ENCODE measurements at regions of chr7 and their contacts with region 1.

Region 1: DNA sequence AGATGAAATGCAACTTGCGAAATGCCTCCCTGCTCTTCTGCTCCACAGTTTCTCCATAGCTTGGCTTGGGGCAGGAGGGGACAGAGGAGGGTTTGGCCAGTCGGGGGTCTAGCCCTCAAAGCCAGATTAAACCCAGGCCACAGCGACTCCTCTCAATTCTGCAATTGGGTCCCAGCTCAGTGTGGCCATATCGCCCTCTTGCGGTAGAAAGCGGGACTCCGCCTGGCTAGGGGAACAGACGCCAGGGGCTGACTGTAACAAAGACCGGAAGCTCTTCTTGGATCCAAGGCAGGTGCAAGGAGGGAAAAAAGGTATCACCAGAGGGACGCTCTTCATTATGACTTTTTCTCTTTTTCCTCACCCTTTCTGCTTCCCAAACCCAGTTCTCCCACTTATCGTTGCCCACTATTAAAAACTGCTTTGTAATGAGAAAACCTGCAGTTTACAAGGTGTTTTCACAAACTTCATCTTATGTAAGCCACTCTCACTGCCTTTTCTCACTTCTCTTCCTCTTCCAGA is 36.6 kb upstream of the TNPO3 start:
- DNase-seq: peak; percentile 90 to 92 (median 91)
- ATAC-seq: peak; percentile 99
- H3K4me3 ChIP-seq: no peak overlapping the region
- H3K27ac ChIP-seq: no peak overlapping the region
- H3K4me1 ChIP-seq: peaks cover 0 to 2% of the 10 kb centered on the region in 2 experiments; a peak in 2 of 5 replicates
- H3K27me3 ChIP-seq: peaks cover 10 to 11% of the 10 kb centered on the region in 2 experiments; a peak in 4 of 5 replicates
- CTCF ChIP-seq: peak; percentile 99 to 100 (median 99)
- EP300 ChIP-seq: no peak
- POLR2A ChIP-seq: no peak
- RAD21 ChIP-seq: peak; percentile 97 to 99

Region 2: DNA sequence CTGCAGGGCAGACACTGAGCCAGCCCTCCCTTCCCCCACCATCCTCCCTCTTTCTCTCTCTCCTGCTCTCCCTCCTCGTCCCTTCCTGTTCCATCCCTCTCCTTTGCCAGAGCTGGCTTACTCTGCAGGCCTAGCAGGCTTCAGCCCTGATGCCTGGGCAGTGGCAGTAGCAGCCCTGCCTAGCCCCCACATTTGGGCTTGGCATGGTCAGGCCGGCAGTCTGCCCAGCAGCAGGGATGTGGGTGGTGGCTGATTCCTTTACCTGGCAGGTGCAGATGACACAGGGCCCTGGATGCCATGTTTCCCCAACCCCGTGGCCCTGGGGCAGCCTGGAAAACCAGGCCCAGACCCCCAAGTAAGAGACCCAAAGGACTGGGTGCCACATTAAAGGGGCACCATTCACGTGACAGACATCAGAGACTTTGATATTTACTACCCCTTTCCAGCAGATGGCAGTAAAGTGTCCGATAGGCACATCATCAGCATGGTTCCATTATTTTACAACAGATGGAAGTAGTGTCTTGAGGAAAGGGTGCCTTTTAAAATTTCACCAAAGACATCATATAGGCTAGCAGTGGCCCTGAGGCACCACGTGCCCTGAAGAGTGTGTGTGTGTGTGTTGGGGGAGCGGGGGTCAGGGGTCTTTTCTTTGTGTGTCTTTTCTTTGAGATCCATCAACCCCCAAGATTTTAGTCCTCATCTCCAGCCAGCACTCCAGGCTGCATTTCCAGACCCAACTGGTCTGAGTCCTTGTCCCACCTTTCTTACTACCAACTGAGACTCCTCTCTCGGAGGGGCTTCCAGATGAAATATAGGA is 187.0 kb before region 1 on chr7:
- CTCF ChIA-PET with region 1: interaction called, 10 read pairs
- POLR2A ChIA-PET with region 1: no interaction called
- in situ Hi-C with region 1: no loop called
- intact Hi-C with region 1: loop called (anchors 1 kb)
- DNase-seq: peak; percentile 64 to 78 (median 72)
- ATAC-seq: peak; percentile 76
- H3K4me3 ChIP-seq: no peak overlapping the region
- H3K27ac ChIP-seq: no peak overlapping the region
- H3K4me1 ChIP-seq: peaks cover 13 to 29% of the 10 kb centered on the region in 2 experiments
- H3K27me3 ChIP-seq: peaks cover 16 to 32% of the 10 kb centered on the region in 2 experiments
- CTCF ChIP-seq: peak; percentile 86 to 92 (median 91)
- EP300 ChIP-seq: no peak
- POLR2A ChIP-seq: no peak
- RAD21 ChIP-seq: peak; percentile 60 to 79

Region 3: DNA sequence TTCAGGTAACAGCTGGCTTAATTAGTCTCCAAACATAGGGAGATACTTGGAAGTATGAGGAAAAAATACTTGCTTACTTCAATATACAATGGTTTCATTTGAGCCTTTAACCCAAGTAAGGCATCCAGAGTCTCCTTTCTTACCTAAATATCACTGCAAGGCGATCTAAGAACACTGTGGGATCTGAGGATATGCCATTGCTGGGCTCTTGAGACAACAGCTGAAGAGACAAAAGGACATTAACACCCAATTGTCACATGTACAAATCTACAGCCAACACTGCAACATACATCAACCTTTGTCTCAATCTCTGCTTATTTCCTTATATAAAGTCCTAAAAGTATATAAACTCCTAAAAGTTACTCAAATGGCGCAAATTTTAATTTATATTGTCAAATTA is 109.4 kb before region 1 on chr7:
- CTCF ChIA-PET with region 1: no interaction called
- POLR2A ChIA-PET with region 1: no interaction called
- in situ Hi-C with region 1: no loop called
- intact Hi-C with region 1: loop called (anchors 5 kb)
- DNase-seq: no peak
- ATAC-seq: no peak
- H3K4me3 ChIP-seq: no peak overlapping the region
- H3K27ac ChIP-seq: no peak overlapping the region
- H3K4me1 ChIP-seq: no peaks in the 10 kb centered on the region
- H3K27me3 ChIP-seq: no peaks in the 10 kb centered on the region
- CTCF ChIP-seq: no peak
- EP300 ChIP-seq: no peak
- POLR2A ChIP-seq: no peak
- RAD21 ChIP-seq: no peak

Region 4: GRCh38 chr7:129054438-129055293 is 36.9 kb before region 1 on chr7 and contains the start of gene TNPO3:
- CTCF ChIA-PET with region 1: interaction called, 5 read pairs
- POLR2A ChIA-PET with region 1: interaction called, 3 read pairs
- in situ Hi-C with region 1: no loop called
- intact Hi-C with region 1: loop called (anchors 1 kb)
- DNase-seq: peak; percentile 97 to 99 (median 98)
- ATAC-seq: peak; percentile 91
- H3K4me3 ChIP-seq: peak within 1 kb of the TSS; percentile 80
- H3K27ac ChIP-seq: peak within 1 kb of the TSS; percentile 99
- H3K4me1 ChIP-seq: peaks cover 18 to 21% of the 10 kb centered on the region in 2 experiments; a peak in 4 of 5 replicates
- H3K27me3 ChIP-seq: no peaks in the 10 kb centered on the region
- CTCF ChIP-seq: peak in 2 of 3 experiments; percentile 1 to 7; a peak in 2 of 6 replicates
- EP300 ChIP-seq: peak; percentile 70
- POLR2A ChIP-seq: peak; percentile 98
- RAD21 ChIP-seq: 0 out of 4 replicates have a peak, but pooled peaks of 1 of the 2 experiments have one; percentile 10
- polyA plus RNA-seq, gene TNPO3: 35.8 to 46.0 TPM

Region 5: GRCh38 chr7:129210256-129210988 is 118.9 kb after region 1 on chr7:
- CTCF ChIA-PET with region 1: interaction called, 3 read pairs
- POLR2A ChIA-PET with region 1: no interaction called
- in situ Hi-C with region 1: no loop called
- intact Hi-C with region 1: loop called (anchors 5 kb)
- DNase-seq: peak; percentile 82 to 88 (median 86)
- ATAC-seq: peak; percentile 90
- H3K4me3 ChIP-seq: no peak overlapping the region
- H3K27ac ChIP-seq: no peak overlapping the region
- H3K4me1 ChIP-seq: peaks cover 5 to 7% of the 10 kb centered on the region in 2 experiments; a peak in 3 of 5 replicates
- H3K27me3 ChIP-seq: peaks cover 52 to 75% of the 10 kb centered on the region in 2 experiments
- CTCF ChIP-seq: peak; percentile 93 to 94 (median 94)
- EP300 ChIP-seq: no peak
- POLR2A ChIP-seq: no peak
- RAD21 ChIP-seq: peak; percentile 84 to 94